ENCODE measurements at regions of chr3 and their contacts with region 1.

Region 1: GRCh38 chr3:129942296-129942695 is 32.2 kb upstream of the TRH start:
- DNase-seq: no peak
- ATAC-seq: peak; percentile 97
- H3K4me3 ChIP-seq: no peak overlapping the region
- H3K27ac ChIP-seq: no peak overlapping the region
- H3K4me1 ChIP-seq: no peaks in the 10 kb centered on the region
- H3K27me3 ChIP-seq: peaks cover 0 to 2% of the 10 kb centered on the region in 2 experiments; a peak in 1 of 4 replicates
- CTCF ChIP-seq: peak; percentile 48 to 69 (median 68)
- EP300 ChIP-seq: no peak
- POLR2A ChIP-seq: no peak
- RAD21 ChIP-seq: peak; percentile 78

Region 2: GRCh38 chr3:129525341-129525968 is 416.8 kb before region 1 on chr3:
- CTCF ChIA-PET with region 1: no interaction called
- POLR2A ChIA-PET with region 1: no interaction called
- RAD21 ChIA-PET with region 1: no interaction called
- SMC1A ChIA-PET with region 1: no interaction called
- in situ Hi-C with region 1: no loop called
- intact Hi-C with region 1: no loop called
- DNase-seq: no peak
- ATAC-seq: peak; percentile 30
- H3K4me3 ChIP-seq: no peak overlapping the region
- H3K27ac ChIP-seq: no peak overlapping the region
- H3K4me1 ChIP-seq: peaks cover 12% of the 10 kb centered on the region
- H3K27me3 ChIP-seq: no peaks in the 10 kb centered on the region
- CTCF ChIP-seq: no peak
- EP300 ChIP-seq: no peak
- POLR2A ChIP-seq: no peak
- RAD21 ChIP-seq: no peak

Region 3: GRCh38 chr3:129992781-129993180 is 50.5 kb after region 1 on chr3:
- CTCF ChIA-PET with region 1: interaction called, 8 read pairs
- POLR2A ChIA-PET with region 1: no interaction called
- RAD21 ChIA-PET with region 1: no interaction called
- SMC1A ChIA-PET with region 1: no interaction called
- in situ Hi-C with region 1: no loop called
- intact Hi-C with region 1: loop called (anchors 5 kb)
- DNase-seq: no peak
- ATAC-seq: peak; percentile 65
- H3K4me3 ChIP-seq: no peak overlapping the region
- H3K27ac ChIP-seq: no peak overlapping the region
- H3K4me1 ChIP-seq: no peaks in the 10 kb centered on the region
- H3K27me3 ChIP-seq: no peaks in the 10 kb centered on the region
- CTCF ChIP-seq: 0 out of 6 replicates have a peak, but pooled peaks of 1 of the 3 experiments have one; percentile 11
- EP300 ChIP-seq: no peak
- POLR2A ChIP-seq: no peak
- RAD21 ChIP-seq: no peak

Region 4: GRCh38 chr3:130111185-130111864 is 169.0 kb after region 1 on chr3:
- CTCF ChIA-PET with region 1: interaction called, 20 read pairs
- POLR2A ChIA-PET with region 1: no interaction called
- RAD21 ChIA-PET with region 1: interaction called, 3 read pairs
- SMC1A ChIA-PET with region 1: no interaction called
- in situ Hi-C with region 1: no loop called
- intact Hi-C with region 1: no loop called
- DNase-seq: peak; percentile 77
- ATAC-seq: peak; percentile 100
- H3K4me3 ChIP-seq: peak overlapping the region; percentile 85
- H3K27ac ChIP-seq: peak overlapping the region; percentile 27
- H3K4me1 ChIP-seq: no peaks in the 10 kb centered on the region
- H3K27me3 ChIP-seq: no peaks in the 10 kb centered on the region
- CTCF ChIP-seq: no peak
- EP300 ChIP-seq: no peak
- POLR2A ChIP-seq: peak; percentile 57
- RAD21 ChIP-seq: no peak

Measured in GM12878 (cell line).